ENCODE measurements at regions of chr17 and their contacts with region 1.

Region 1: GRCh38 chr17:78082988-78083387 is 45.6 kb downstream of the TMC6 start:
- DNase-seq: no peak
- ATAC-seq: peak in 3 of 8 donors; percentile 22 to 46 (median 31)
- H3K4me3 ChIP-seq: no peak overlapping the region
- H3K27ac ChIP-seq: peak overlapping the region in 6 of 10 donors; percentile 59 to 80 (median 73)
- H3K4me1 ChIP-seq: peaks cover 0 to 50% (median 20%) of the 10 kb centered on the region in 9 donors
- H3K27me3 ChIP-seq: no peaks in the 10 kb centered on the region
- CTCF ChIP-seq: no peak

Region 2: GRCh38 chr17:77609553-77610517 is 473.2 kb before region 1 on chr17:
- intact Hi-C with region 1: loop called in 1 of 10 experiments (anchors 5 kb)
- DNase-seq: no peak
- ATAC-seq: no peak
- H3K4me3 ChIP-seq: peak overlapping the region in 1 of 10 donors; percentile 32
- H3K27ac ChIP-seq: peak overlapping the region in 2 of 10 donors; percentile 34 to 37
- H3K4me1 ChIP-seq: peaks cover 0 to 20% (median 0%) of the 10 kb centered on the region in 9 donors
- H3K27me3 ChIP-seq: no peaks in the 10 kb centered on the region
- CTCF ChIP-seq: no peak

Region 3: DNA sequence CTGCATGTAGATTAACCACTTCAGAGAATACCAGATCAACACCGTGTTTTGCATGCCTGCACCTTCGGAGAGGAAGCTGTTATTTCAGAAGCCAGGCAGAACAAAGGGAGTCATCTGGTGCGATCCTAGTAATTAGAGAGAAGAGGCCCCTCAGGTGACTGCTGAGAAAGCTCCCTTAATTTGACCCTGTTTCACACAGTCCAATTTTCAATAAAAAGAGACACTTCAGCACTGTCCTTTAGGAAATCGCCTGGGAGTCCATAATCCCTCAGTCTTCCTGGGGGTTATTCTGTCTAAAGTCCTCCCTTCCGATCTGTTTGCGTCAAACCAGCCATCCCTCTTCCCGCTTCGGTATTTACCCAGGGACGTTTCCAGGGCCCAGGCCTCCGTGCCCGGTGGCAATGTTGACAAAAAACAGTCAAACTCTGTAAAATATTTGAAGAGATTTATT is 147.8 kb before region 1 on chr17:
- intact Hi-C with region 1: no loop called
- DNase-seq: no peak
- ATAC-seq: no peak
- H3K4me3 ChIP-seq: no peak overlapping the region
- H3K27ac ChIP-seq: no peak overlapping the region
- H3K4me1 ChIP-seq: no peaks in the 10 kb centered on the region
- H3K27me3 ChIP-seq: peaks cover 0 to 22% (median 3%) of the 10 kb centered on the region in 7 donors
- CTCF ChIP-seq: no peak

Region 4: GRCh38 chr17:78019367-78019975 is 63.5 kb before region 1 on chr17:
- intact Hi-C with region 1: loop called in 5 of 10 experiments (anchors 10 kb)
- DNase-seq: no peak
- ATAC-seq: peak in 1 of 8 donors; percentile 39
- H3K4me3 ChIP-seq: no peak overlapping the region
- H3K27ac ChIP-seq: peak overlapping the region in 3 of 10 donors; percentile 2 to 32 (median 3)
- H3K4me1 ChIP-seq: peaks cover 0 to 28% (median 13%) of the 10 kb centered on the region in 9 donors
- H3K27me3 ChIP-seq: no peaks in the 10 kb centered on the region
- CTCF ChIP-seq: peak in 8 of 9 donors; percentile 34 to 73 (median 66)

Region 5: DNA sequence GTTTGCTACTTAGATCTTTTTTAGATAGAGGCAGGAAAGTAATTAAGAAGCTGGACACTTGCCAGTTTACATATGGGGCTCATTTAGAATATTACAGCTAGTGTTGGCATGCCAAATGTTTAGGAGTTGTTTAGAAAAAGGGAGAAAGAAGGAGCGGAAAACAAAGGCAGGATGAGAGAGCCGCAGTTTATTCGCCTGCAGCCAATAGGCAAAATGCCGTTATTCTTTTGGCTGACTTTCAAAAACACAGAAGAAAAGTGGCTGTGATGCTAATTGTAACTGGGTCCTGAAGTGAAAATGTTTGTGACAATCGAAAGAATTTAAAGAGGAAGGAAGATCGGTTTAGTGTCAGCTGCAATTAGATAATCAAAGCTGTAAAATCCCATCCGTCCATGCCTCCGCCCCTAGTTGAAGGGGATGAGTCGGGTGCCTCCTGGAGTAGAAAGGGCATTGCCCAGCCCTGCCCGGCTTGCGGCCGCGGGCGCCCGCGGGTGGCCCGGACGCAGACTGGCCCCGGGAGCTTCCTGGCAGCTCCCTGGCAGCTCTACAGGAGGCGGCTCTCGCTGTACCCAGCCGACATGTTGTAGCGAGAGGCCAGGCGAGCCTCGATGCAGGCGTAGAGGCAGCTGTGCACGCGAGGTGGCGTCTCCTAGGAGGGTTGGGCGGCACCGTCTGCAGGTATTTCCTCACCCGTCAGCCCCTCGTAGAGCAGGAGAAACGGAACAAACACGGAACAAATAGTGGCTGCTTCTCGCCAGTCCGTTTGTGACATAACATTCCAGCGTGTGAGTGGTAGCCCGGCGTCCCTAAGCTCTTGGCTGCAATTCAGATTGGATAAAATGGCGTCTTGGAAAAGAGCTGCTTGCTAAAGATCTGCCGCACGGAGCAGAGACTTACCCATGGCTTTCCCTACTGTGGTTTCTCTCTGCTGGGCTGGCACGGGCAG is 42.3 kb before region 1 on chr17:
- intact Hi-C with region 1: no loop called
- DNase-seq: peak; percentile 54 to 59
- ATAC-seq: peak; percentile 79 to 91 (median 84)
- H3K4me3 ChIP-seq: peak overlapping the region in 9 of 10 donors; percentile 36 to 71 (median 58)
- H3K27ac ChIP-seq: peak overlapping the region; percentile 38 to 96 (median 92)
- H3K4me1 ChIP-seq: peaks cover 3 to 44% (median 19%) of the 10 kb centered on the region in 9 donors
- H3K27me3 ChIP-seq: no peaks in the 10 kb centered on the region
- CTCF ChIP-seq: peak in 4 of 9 donors; percentile 16 to 23 (median 20)

Region 6: DNA sequence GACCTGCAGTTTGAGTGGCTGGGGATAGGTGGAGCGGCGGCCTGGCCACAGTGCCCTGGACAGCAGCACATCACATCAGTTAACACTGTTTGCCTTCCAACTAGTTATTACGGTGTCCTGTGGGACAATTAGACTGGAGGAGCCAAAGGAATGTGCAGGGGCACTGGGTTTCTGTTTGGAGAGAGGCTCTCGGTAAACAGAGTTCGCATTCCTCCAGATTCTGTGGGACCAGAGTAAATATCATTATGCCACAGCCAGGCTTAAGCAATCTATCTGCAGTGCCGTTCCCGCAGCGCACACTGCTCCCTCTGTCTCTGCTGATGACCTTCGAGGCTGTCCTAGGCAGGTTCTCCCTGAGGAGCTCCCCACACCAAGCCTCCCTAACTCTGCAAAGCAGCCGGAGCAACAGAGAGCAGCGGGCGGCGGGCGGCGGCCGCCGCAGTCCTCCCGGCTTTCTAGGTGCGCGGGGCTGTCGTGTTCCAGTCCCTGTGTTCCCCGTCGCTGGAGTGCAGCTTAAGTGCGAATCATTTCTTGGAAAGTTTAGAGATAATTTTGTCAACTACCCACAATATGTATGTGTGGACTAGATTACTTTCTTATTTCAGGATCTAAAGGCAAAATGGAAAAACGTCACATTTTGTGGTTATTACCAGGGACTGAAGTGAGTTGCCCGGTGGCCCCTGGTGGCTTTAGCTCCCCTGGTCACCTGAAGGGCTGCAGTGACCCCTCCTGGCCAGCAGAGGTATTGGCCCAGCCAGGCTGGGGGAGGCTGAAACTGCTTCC is 338.7 kb after region 1 on chr17:
- intact Hi-C with region 1: no loop called
- DNase-seq: peak; percentile 76 to 80
- ATAC-seq: peak; percentile 60 to 81 (median 74)
- H3K4me3 ChIP-seq: no peak overlapping the region
- H3K27ac ChIP-seq: peak overlapping the region in 6 of 10 donors; percentile 25 to 98 (median 54)
- H3K4me1 ChIP-seq: peaks cover 20 to 62% (median 51%) of the 10 kb centered on the region in 9 donors
- H3K27me3 ChIP-seq: no peaks in the 10 kb centered on the region
- CTCF ChIP-seq: peak; percentile 98 to 100 (median 99)